PC-9 (cell line): ENCODE measurements at regions of chr11 and their contacts with region 1.

Region 1: DNA sequence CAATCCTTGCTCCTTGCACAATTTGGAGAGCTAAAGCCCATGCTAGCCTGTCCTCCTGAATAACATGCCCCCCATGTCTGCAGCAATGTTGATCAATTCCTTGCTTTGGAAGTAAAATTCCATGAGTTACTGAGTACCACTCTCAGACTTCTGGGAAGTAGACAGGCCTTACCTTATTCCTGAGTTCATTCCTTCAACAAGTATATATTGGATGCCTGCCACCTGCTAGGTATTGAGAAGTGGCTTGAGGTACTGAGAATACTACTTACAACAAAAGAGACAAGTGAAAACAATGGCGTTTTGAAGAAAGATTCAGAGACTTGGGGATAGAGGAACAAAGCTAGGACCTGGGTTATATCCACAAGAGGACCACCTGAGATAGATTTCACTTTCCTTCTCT is 12.4 kb downstream of the PATE2 start:
- DNase-seq: no peak
- H3K4me3 ChIP-seq: no peak overlapping the region
- H3K27ac ChIP-seq: no peak overlapping the region
- H3K4me1 ChIP-seq: no peaks in the 10 kb centered on the region
- H3K27me3 ChIP-seq: peaks cover 75% of the 10 kb centered on the region
- CTCF ChIP-seq: no peak

Region 2: GRCh38 chr11:125728969-125729368 is 37.3 kb before region 1 on chr11:
- CTCF ChIA-PET with region 1: no interaction called
- POLR2A ChIA-PET with region 1: interaction called, 11 read pairs
- intact Hi-C with region 1: no loop called
- DNase-seq: no peak
- H3K4me3 ChIP-seq: no peak overlapping the region
- H3K27ac ChIP-seq: no peak overlapping the region
- H3K4me1 ChIP-seq: no peaks in the 10 kb centered on the region
- H3K27me3 ChIP-seq: peaks cover 30% of the 10 kb centered on the region
- CTCF ChIP-seq: no peak